Endothelial cell of umbilical vein (primary cell): ENCODE measurements at regions of chrX and their contacts with region 1.

Region 1: DNA sequence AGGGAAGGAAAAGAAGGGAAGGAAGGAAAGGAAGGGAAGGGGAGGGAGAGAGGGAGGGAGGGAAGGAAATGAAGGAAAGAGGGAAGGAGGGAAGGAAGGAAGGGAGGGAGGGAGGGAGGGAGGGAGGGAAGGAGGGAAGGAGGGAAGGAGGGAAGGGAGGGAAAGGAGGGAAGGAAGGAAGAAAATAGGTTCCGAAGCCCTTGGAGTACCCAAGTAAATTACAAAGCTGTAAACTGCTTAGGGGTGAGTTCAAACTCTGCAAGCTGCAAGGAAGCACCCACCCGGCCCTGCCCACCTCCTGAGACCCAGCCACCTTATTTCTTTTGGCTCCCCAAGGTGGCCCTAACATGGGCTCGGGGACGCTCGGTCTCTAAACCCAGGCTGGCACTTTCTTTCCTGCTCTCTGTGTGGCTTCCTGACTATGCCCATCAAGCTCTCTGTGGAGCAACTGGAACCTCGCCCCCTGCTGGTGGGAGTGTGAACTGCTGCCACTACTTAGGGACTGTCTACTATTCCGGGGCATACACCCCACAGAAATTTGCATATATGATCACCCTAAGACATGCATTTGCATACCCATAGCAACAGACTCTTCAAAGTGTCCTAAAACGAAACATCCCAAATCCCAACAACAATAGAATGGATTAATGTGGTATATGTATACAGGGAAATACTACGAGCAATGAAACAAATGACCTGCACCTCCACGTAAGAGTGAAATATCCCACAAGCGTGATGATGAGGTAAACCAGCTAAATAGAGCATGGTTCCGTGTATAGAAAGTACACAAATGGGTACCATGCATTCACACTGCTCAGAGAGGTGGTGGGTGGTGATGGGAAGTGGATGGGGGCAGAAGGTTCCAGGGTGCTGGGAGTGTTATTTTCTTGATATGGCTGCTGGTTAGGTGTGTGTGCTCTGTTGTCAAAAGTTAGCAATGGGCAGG is 151.7 kb upstream of the TBL1X start:
- DNase-seq: peak; percentile 19
- H3K4me3 ChIP-seq: no peak overlapping the region
- H3K27ac ChIP-seq: no peak overlapping the region
- H3K4me1 ChIP-seq: peaks cover 1% of the 10 kb centered on the region
- H3K27me3 ChIP-seq: no peaks in the 10 kb centered on the region
- CTCF ChIP-seq: peak; percentile 59 to 68
- POLR2A ChIP-seq: no peak

Region 2: DNA sequence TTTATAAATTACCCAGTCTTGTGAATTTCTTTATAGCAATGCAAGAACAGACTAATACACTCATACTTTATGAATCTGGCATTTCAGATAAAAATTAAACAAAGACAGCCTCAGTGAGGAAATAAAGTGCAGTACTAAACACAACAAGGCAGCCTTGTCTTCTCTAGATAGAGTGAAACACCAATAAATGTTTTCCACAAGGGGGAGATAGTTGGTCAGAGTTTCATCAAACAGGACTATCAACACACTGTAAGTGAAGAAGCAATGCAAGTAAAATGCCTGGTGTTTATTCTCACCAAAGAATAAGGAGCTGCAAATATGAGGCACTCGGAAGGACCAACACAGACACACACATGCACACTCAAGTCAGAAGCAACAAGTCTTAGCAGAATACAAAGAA is 342.1 kb before region 1 on chrX:
- CTCF ChIA-PET with region 1: interaction called, 5 read pairs
- POLR2A ChIA-PET with region 1: no interaction called
- dilution Hi-C with region 1: no loop called
- intact Hi-C with region 1: loop called (anchors 1 kb)
- DNase-seq: peak; percentile 48
- H3K4me3 ChIP-seq: no peak overlapping the region
- H3K27ac ChIP-seq: no peak overlapping the region
- H3K4me1 ChIP-seq: no peaks in the 10 kb centered on the region
- H3K27me3 ChIP-seq: no peaks in the 10 kb centered on the region
- CTCF ChIP-seq: peak in 1 of 2 donors; percentile 27
- POLR2A ChIP-seq: no peak

Region 3: GRCh38 chrX:9055354-9055753 is 257.8 kb before region 1 on chrX:
- CTCF ChIA-PET with region 1: no interaction called
- POLR2A ChIA-PET with region 1: no interaction called
- dilution Hi-C with region 1: no loop called
- intact Hi-C with region 1: no loop called
- DNase-seq: no peak
- H3K4me3 ChIP-seq: no peak overlapping the region
- H3K27ac ChIP-seq: no peak overlapping the region
- H3K4me1 ChIP-seq: no peaks in the 10 kb centered on the region
- H3K27me3 ChIP-seq: no peaks in the 10 kb centered on the region
- CTCF ChIP-seq: no peak
- POLR2A ChIP-seq: no peak

Region 4: DNA sequence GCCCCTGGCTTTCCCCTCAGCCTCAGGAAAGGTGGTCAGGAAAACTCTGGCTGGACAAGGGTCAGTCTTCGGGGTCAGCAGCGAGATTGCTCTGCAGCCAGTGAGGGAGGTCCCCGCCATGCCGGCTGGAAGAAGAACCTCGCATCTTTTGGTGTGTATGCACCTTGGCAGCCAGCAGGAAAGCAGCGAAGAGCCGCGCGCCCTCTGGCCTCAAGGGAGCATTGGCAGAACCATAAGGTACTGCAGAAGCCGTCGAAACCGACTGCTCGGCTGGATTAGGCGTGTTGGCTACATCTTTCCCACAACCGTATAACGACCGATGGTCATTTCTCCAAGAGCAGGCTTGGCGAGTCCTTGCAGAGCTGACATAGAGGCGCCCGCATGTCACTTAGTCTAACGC is 404.2 kb after region 1 on chrX:
- CTCF ChIA-PET with region 1: no interaction called
- POLR2A ChIA-PET with region 1: no interaction called
- dilution Hi-C with region 1: no loop called
- intact Hi-C with region 1: no loop called
- DNase-seq: no peak
- H3K4me3 ChIP-seq: no peak overlapping the region
- H3K27ac ChIP-seq: no peak overlapping the region
- H3K4me1 ChIP-seq: no peaks in the 10 kb centered on the region
- H3K27me3 ChIP-seq: no peaks in the 10 kb centered on the region
- CTCF ChIP-seq: no peak
- POLR2A ChIP-seq: no peak